KBM-7 (cell line): ENCODE measurements at regions of chr12 and their contacts with region 1.

Region 1: DNA sequence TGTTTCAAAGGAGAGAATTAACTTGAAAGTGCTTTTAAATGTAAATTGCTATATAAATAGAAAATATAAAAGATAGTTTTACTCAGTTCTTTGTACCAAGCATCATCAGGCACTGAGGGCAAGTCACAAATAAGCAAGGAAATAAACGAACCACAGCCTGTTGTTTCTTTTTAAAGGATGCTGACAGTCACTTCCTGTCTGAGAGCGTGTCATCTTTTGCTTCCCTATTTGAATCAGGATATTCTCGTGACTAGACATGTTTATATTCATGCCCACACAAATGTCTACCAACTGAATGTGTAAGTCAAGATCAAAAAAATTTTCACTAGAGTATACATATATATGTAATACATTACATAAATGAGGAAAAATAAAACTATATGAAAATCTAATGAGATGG is 31.4 kb upstream of the SLC2A13 start:
- DNase-seq: peak; percentile 76

Region 2: DNA sequence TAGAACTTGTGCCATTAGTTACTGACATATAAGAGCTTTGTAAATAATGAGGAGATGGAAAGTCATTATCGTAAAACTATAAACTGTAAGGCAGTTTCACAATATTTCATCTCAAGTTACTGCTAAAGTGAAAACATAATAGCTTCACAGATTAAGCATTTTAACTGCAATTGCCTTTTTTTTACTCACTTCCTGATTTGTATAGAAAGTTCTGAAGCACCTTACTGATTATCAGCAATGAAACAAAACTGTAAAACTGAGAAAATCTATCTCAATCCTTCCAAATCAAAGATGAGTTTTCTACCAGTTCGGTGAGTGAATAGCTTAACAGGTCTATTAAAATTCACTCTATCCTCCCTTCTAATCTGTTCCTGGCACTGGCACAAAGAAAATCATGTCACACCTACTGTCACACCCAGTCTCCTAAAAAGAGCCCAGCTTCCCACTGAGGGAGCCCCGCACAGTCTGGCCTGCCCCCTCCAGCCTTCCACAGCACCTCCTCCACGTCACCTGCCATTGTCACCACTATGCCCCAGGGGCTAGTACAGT is 356.3 kb before region 1 on chr12:
- in situ Hi-C with region 1: loop called (anchors 25 kb)
- DNase-seq: no peak